ENCODE measurements at regions of chr6 and their contacts with region 1.

Region 1: DNA sequence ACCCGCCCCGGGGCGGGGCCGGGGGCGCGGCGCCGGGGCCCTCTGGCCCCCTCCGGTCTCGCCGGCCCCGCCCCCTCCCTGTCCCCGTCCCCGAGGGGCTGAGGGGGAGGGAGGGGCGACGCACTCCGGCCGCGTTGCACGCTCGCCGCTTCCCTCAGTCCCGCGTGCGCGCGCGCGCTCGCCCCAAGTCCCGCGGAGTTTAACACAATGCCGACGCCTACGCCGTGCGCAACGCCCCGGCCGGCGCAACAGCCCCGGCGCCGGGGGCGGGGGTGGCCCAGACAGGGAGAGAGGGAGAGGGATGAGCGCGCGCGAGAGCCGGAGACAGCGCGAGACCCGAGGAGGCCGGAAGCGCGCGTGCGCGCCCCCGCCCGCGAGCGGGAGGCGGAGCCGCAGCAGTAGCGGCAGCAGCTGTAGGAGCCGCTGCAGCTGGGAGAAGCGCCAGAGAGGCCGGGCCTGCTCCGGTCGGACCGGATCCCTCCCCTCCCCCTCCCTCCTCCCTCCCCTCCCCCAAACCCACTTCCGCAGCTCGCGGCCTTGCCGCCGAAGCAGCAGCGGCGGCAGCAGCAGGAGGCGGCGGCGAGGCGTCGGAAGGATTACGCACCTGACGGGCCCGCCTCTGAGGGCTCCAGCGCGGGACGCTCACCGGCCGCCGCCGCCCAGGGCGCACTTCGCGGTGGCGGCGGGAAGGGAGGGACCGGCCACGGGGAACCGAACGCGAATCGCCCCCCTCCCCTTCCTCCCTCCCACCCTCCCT is 905 bp downstream of the ZBTB2 start:
- DNase-seq: peak; percentile 97 to 100 (median 99)
- ATAC-seq: peak; percentile 88
- H3K4me3 ChIP-seq: peak overlapping the region; percentile 60
- H3K4me3 Mint-ChIP-seq: peak overlapping the region; percentile 68 to 99 (median 94)
- H3K27ac ChIP-seq: peak overlapping the region; percentile 96
- H3K27ac Mint-ChIP-seq: peak overlapping the region; percentile 51 to 98 (median 94)
- H3K4me1 ChIP-seq: peaks cover 44 to 45% of the 10 kb centered on the region in 2 donors
- H3K4me1 Mint-ChIP-seq: peaks cover 39 to 74% (median 67%) of the 10 kb centered on the region in 7 donors
- H3K27me3 ChIP-seq: no peaks in the 10 kb centered on the region
- H3K27me3 Mint-ChIP-seq: peaks cover 0 to 4% (median 0%) of the 10 kb centered on the region in 5 donors

Region 2: DNA sequence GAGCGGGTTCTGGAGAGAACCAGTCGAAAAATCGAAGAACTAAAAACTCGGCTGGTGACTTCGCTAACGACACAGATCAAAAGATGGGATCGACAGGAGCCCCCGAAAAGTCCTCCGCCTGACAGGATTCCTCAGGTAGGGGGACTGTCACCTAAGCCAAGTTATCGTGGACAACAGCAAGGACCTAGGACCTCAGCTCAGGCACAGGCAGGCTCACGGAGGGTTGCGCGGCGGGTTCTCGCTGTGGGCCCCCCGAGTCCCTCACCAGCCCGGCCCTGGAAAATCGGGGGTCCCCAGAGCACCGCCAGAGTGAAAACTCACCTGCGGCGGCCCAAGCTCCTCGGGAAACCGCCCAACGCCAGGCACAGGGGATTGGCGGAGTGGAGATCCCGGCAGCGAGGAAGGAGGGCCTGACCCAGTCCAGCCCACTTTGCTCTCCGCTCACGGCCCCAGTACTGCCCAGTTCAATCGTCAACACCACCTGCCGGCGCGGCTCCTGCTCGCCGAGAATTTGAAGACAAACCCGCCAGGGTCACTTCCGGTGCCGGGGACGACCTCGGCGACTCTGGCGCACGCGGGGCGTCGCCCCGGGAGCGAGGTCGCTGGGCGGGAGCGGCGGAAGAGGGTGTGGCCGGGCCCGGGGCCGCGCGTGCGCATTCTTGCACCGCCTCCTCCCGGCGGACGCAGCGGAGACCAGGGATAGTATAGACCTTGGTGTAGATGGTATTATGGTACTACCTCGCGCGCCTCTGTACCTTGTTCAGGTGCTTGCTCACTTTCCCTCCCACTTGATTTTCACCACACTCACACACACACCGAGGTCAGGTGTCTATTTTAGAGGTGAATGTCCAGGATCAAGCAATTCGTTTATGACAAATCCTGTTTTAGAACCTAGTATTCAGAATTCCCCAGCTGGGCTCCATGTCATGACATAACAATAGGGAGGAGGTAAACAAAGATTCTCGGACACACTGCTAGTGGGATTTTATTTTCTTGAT is 1742.0 kb before region 1 on chr6 and contains the start of gene KATNA1:
- CTCF ChIA-PET with region 1: no interaction called
- POLR2A ChIA-PET with region 1: no interaction called
- intact Hi-C with region 1: loop called in 1 of 2 experiments (anchors 10 kb)
- DNase-seq: peak; percentile 69 to 95 (median 81)
- ATAC-seq: peak; percentile 96
- H3K4me3 ChIP-seq: peak within 1 kb of the TSS; percentile 91
- H3K4me3 Mint-ChIP-seq: peak within 1 kb of the TSS; percentile 83 to 96 (median 91)
- H3K27ac ChIP-seq: peak within 1 kb of the TSS; percentile 82
- H3K27ac Mint-ChIP-seq: peak within 1 kb of the TSS; percentile 82 to 95 (median 90)
- H3K4me1 ChIP-seq: peaks cover 7 to 17% of the 10 kb centered on the region in 2 donors
- H3K4me1 Mint-ChIP-seq: peaks cover 2 to 41% (median 33%) of the 10 kb centered on the region in 7 donors
- H3K27me3 ChIP-seq: no peaks in the 10 kb centered on the region
- H3K27me3 Mint-ChIP-seq: no peaks in the 10 kb centered on the region
- total RNA-seq, gene KATNA1: 14.1 to 22.6 (median 16.7) TPM

Region 3: DNA sequence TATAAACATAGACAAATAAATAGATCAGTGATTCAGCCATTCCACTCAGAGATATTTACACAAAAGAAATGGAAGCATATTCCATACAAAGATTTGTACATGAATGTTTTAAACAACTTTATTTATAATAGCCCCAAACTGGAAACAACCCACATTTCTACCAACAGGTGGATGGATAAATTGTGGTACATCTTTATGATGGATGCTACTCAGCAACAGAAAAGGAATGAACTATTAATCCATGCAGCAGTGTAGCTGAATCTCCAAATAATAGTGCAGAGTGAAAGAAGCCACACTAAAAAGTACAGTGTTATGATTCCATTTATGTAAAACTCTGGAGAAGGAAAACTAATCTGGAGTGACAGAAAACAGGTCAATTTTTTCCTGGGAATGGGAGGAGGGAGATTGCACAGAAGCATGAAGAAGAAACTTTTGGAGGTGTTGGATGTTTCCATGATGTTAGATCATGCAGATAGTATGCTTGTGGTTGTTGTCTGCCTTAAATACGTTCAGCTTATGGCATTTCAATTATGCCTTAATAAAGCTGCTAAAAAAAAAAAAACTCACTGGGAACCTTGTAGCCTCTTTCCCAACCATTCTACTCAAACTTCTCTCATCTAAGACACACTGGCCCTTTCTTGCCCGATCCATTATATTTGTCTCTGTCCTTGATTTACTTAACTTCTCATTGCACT is 1146.7 kb before region 1 on chr6:
- CTCF ChIA-PET with region 1: no interaction called
- POLR2A ChIA-PET with region 1: no interaction called
- intact Hi-C with region 1: no loop called
- DNase-seq: no peak
- ATAC-seq: no peak
- H3K4me3 ChIP-seq: no peak overlapping the region
- H3K4me3 Mint-ChIP-seq: no peak overlapping the region
- H3K27ac ChIP-seq: no peak overlapping the region
- H3K27ac Mint-ChIP-seq: no peak overlapping the region
- H3K4me1 ChIP-seq: no peaks in the 10 kb centered on the region
- H3K4me1 Mint-ChIP-seq: peaks cover 0 to 4% (median 0%) of the 10 kb centered on the region in 7 donors
- H3K27me3 ChIP-seq: no peaks in the 10 kb centered on the region
- H3K27me3 Mint-ChIP-seq: peaks cover 0 to 4% (median 0%) of the 10 kb centered on the region in 5 donors

Region 4: GRCh38 chr6:151181706-151182363 is 208.6 kb before region 1 on chr6:
- CTCF ChIA-PET with region 1: no interaction called
- POLR2A ChIA-PET with region 1: no interaction called
- intact Hi-C with region 1: no loop called
- DNase-seq: no peak
- ATAC-seq: no peak
- H3K4me3 ChIP-seq: no peak overlapping the region
- H3K4me3 Mint-ChIP-seq: no peak overlapping the region
- H3K27ac ChIP-seq: no peak overlapping the region
- H3K27ac Mint-ChIP-seq: no peak overlapping the region
- H3K4me1 ChIP-seq: no peaks in the 10 kb centered on the region
- H3K4me1 Mint-ChIP-seq: no peaks in the 10 kb centered on the region
- H3K27me3 ChIP-seq: no peaks in the 10 kb centered on the region
- H3K27me3 Mint-ChIP-seq: peaks cover 2 to 24% (median 21%) of the 10 kb centered on the region in 5 donors

Region 5: DNA sequence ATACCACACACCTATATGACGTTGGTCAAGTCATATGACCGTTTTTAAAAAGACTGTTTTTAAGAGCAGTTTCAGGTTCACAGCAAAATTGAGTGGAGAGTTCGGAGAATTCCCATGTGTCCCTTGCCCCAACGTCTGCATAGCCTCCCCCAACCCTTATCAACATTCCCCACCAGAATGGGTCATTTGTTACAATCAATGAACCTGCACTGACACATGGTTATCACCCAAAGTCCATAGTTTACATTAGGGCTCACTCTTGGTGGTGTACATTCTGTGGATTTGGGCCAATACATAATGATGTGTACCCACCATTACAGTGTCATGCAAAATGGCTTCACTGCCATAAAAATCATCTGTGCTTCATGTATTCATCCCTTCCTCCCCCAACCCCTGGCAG is 51.1 kb before region 1 on chr6:
- CTCF ChIA-PET with region 1: no interaction called
- POLR2A ChIA-PET with region 1: no interaction called
- intact Hi-C with region 1: loop called (anchors 2 to 5 kb)
- DNase-seq: no peak
- ATAC-seq: no peak
- H3K4me3 ChIP-seq: no peak overlapping the region
- H3K4me3 Mint-ChIP-seq: no peak overlapping the region
- H3K27ac ChIP-seq: no peak overlapping the region
- H3K27ac Mint-ChIP-seq: no peak overlapping the region
- H3K4me1 ChIP-seq: no peaks in the 10 kb centered on the region
- H3K4me1 Mint-ChIP-seq: peaks cover 0 to 5% (median 4%) of the 10 kb centered on the region in 7 donors
- H3K27me3 ChIP-seq: no peaks in the 10 kb centered on the region
- H3K27me3 Mint-ChIP-seq: peaks cover 0 to 3% (median 0%) of the 10 kb centered on the region in 5 donors

Region 6: GRCh38 chr6:151370509-151371078 is 19.9 kb before region 1 on chr6:
- CTCF ChIA-PET with region 1: interaction called, 5 read pairs
- POLR2A ChIA-PET with region 1: interaction called, 41 read pairs
- intact Hi-C with region 1: loop called (anchors 1 kb)
- DNase-seq: no peak
- ATAC-seq: no peak
- H3K4me3 ChIP-seq: no peak overlapping the region
- H3K4me3 Mint-ChIP-seq: no peak overlapping the region
- H3K27ac ChIP-seq: no peak overlapping the region
- H3K27ac Mint-ChIP-seq: peak overlapping the region in 5 of 9 donors; percentile 25 to 93 (median 71)
- H3K4me1 ChIP-seq: peaks cover 17 to 28% of the 10 kb centered on the region in 2 donors
- H3K4me1 Mint-ChIP-seq: peaks cover 35 to 48% (median 45%) of the 10 kb centered on the region in 7 donors
- H3K27me3 ChIP-seq: no peaks in the 10 kb centered on the region
- H3K27me3 Mint-ChIP-seq: no peaks in the 10 kb centered on the region

Region 7: GRCh38 chr6:151451950-151452749 is 61.7 kb after region 1 on chr6 and contains the start of gene RMND1:
- CTCF ChIA-PET with region 1: interaction called, 4 read pairs
- POLR2A ChIA-PET with region 1: interaction called, 50 read pairs
- intact Hi-C with region 1: loop called (anchors 1 kb)
- DNase-seq: peak; percentile 92 to 99 (median 99)
- ATAC-seq: peak; percentile 98
- H3K4me3 ChIP-seq: peak within 1 kb of the TSS; percentile 90
- H3K4me3 Mint-ChIP-seq: peak within 1 kb of the TSS; percentile 90 to 98 (median 96)
- H3K27ac ChIP-seq: peak within 1 kb of the TSS; percentile 86
- H3K27ac Mint-ChIP-seq: peak within 1 kb of the TSS; percentile 83 to 98 (median 92)
- H3K4me1 ChIP-seq: peaks cover 15 to 20% of the 10 kb centered on the region in 2 donors
- H3K4me1 Mint-ChIP-seq: peaks cover 36 to 68% (median 54%) of the 10 kb centered on the region in 7 donors
- H3K27me3 ChIP-seq: no peaks in the 10 kb centered on the region
- H3K27me3 Mint-ChIP-seq: peaks cover 0 to 5% (median 0%) of the 10 kb centered on the region in 5 donors
- total RNA-seq, gene RMND1: 8.8 to 21.5 (median 18.7) TPM

Region 8: GRCh38 chr6:151546941-151547659 is 156.6 kb after region 1 on chr6:
- CTCF ChIA-PET with region 1: no interaction called
- POLR2A ChIA-PET with region 1: no interaction called
- intact Hi-C with region 1: no loop called
- DNase-seq: no peak
- ATAC-seq: no peak
- H3K4me3 ChIP-seq: no peak overlapping the region
- H3K4me3 Mint-ChIP-seq: no peak overlapping the region
- H3K27ac ChIP-seq: no peak overlapping the region
- H3K27ac Mint-ChIP-seq: no peak overlapping the region
- H3K4me1 ChIP-seq: no peaks in the 10 kb centered on the region
- H3K4me1 Mint-ChIP-seq: peaks cover 0 to 3% (median 0%) of the 10 kb centered on the region in 7 donors
- H3K27me3 ChIP-seq: no peaks in the 10 kb centered on the region
- H3K27me3 Mint-ChIP-seq: peaks cover 0 to 20% (median 10%) of the 10 kb centered on the region in 5 donors

Region 9: GRCh38 chr6:151647976-151648639 is 257.7 kb after region 1 on chr6:
- CTCF ChIA-PET with region 1: no interaction called
- POLR2A ChIA-PET with region 1: no interaction called
- intact Hi-C with region 1: no loop called
- DNase-seq: no peak
- ATAC-seq: no peak
- H3K4me3 ChIP-seq: no peak overlapping the region
- H3K4me3 Mint-ChIP-seq: no peak overlapping the region
- H3K27ac ChIP-seq: no peak overlapping the region
- H3K27ac Mint-ChIP-seq: no peak overlapping the region
- H3K4me1 ChIP-seq: no peaks in the 10 kb centered on the region
- H3K4me1 Mint-ChIP-seq: peaks cover 0 to 4% (median 0%) of the 10 kb centered on the region in 7 donors
- H3K27me3 ChIP-seq: no peaks in the 10 kb centered on the region
- H3K27me3 Mint-ChIP-seq: peaks cover 27 to 62% (median 38%) of the 10 kb centered on the region in 5 donors

Region 10: GRCh38 chr6:152982768-152983636 is 1592.5 kb after region 1 on chr6 and contains the start of gene FBXO5:
- CTCF ChIA-PET with region 1: no interaction called
- POLR2A ChIA-PET with region 1: interaction called, 5 read pairs
- intact Hi-C with region 1: loop called (anchors 2 kb)
- DNase-seq: peak; percentile 94 to 98 (median 96)
- ATAC-seq: peak; percentile 97
- H3K4me3 ChIP-seq: peak within 1 kb of the TSS; percentile 94
- H3K4me3 Mint-ChIP-seq: peak within 1 kb of the TSS; percentile 92 to 100 (median 96)
- H3K27ac ChIP-seq: peak within 1 kb of the TSS; percentile 89
- H3K27ac Mint-ChIP-seq: peak within 1 kb of the TSS; percentile 87 to 99 (median 95)
- H3K4me1 ChIP-seq: peaks cover 10 to 20% of the 10 kb centered on the region in 2 donors
- H3K4me1 Mint-ChIP-seq: peaks cover 33 to 58% (median 43%) of the 10 kb centered on the region in 7 donors
- H3K27me3 ChIP-seq: no peaks in the 10 kb centered on the region
- H3K27me3 Mint-ChIP-seq: no peaks in the 10 kb centered on the region
- total RNA-seq, gene FBXO5: 3.2 to 50.2 (median 9.2) TPM

Measured in naive thymus-derived CD4-positive, alpha-beta T cell (primary cell).